ENCODE measurements at regions of chr12 and their contacts with region 1.

Region 1: GRCh38 chr12:100593490-100593889 is 20.0 kb downstream of the GAS2L3 start:
- DNase-seq: no peak
- ATAC-seq: no peak
- H3K4me3 ChIP-seq: no peak overlapping the region
- H3K27ac ChIP-seq: no peak overlapping the region
- H3K4me1 ChIP-seq: no peaks in the 10 kb centered on the region
- H3K27me3 ChIP-seq: no peaks in the 10 kb centered on the region
- CTCF ChIP-seq: no peak

Region 2: GRCh38 chr12:100612606-100613005 is 19.1 kb after region 1 on chr12:
- CTCF ChIA-PET with region 1: no interaction called
- POLR2A ChIA-PET with region 1: no interaction called
- intact Hi-C with region 1: loop called (anchors 1 kb)
- DNase-seq: peak; percentile 53
- ATAC-seq: peak; percentile 98
- H3K4me3 ChIP-seq: no peak overlapping the region
- H3K27ac ChIP-seq: no peak overlapping the region
- H3K4me1 ChIP-seq: peaks cover 10% of the 10 kb centered on the region; the same call in 1 of the 2 replicates
- H3K27me3 ChIP-seq: no peaks in the 10 kb centered on the region
- CTCF ChIP-seq: no peak